ENCODE measurements at regions of chr13 and their contacts with region 1.

Region 1: DNA sequence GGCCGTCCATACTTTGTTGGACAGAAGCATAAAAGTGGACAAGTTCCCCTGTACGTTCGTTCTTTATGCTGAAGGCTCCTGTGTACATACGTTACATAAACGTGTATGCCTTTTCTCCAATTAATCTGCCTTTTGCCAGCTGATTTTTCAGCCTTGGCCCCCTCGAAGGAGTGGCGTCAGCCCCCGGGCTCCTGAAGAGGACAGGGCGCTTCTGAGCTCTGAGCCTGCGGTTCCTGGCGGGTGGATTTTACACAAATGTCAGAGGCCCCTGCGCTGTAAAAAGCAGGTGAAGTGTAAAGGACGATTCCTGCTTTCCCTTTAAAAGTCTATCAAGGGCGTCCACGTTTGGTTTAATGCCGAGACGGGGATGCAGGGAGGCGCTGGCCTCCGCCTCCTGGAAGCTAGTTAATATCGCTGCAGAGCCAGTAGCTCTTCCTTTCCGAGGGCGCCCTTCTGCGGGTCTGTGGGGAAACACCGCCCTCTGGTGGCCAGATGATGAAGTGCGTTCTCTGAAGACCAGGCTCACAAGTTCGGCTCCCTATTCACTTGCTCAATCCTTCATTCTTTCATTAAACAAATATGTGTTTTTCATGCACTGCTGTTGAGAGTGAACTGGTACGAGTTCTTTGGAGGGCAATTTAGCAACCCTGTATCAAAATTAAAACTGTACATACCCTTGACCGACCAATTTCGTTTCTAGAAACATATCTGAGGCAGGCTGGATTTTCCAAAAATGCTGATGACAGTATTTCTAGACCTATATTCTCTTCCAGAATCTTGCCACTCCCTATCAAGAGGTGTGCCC is 62.0 kb downstream of the GPR12 start:
- DNase-seq: peak; percentile 86
- ATAC-seq: peak; percentile 86
- H3K4me3 Mint-ChIP-seq: no peak overlapping the region
- H3K27ac Mint-ChIP-seq: no peak overlapping the region
- H3K4me1 Mint-ChIP-seq: no peaks in the 10 kb centered on the region
- H3K27me3 Mint-ChIP-seq: peaks cover 2% of the 10 kb centered on the region

Region 2: GRCh38 chr13:26482451-26483197 is 216.0 kb before region 1 on chr13:
- CTCF ChIA-PET with region 1: interaction called, 45 read pairs
- POLR2A ChIA-PET with region 1: no interaction called
- DNase-seq: peak; percentile 77
- ATAC-seq: peak; percentile 91
- H3K4me3 Mint-ChIP-seq: no peak overlapping the region
- H3K27ac Mint-ChIP-seq: peak overlapping the region; percentile 49
- H3K4me1 Mint-ChIP-seq: peaks cover 14% of the 10 kb centered on the region
- H3K27me3 Mint-ChIP-seq: no peaks in the 10 kb centered on the region

Region 3: DNA sequence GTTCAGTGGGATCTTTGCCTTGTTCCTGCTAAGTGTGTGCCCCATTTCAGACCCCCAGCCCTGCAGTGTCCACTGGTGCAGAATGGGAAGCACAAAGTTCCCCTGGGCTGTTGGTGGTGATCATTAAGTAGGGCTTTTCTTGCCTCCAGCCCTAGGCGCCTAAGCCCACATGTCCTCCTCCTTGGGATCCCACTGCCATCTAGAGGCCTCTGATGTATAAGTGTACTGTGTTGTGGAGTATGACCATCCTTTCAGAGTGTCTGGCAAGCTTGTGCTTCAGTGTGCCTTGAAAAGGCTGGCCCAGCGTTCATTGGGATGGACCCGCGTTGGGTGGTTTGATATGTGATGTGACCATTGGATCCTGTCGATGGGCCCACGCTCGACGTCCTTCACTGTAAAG is 69.9 kb before region 1 on chr13:
- CTCF ChIA-PET with region 1: interaction called, 10 read pairs
- POLR2A ChIA-PET with region 1: no interaction called
- DNase-seq: no peak
- ATAC-seq: no peak
- H3K4me3 Mint-ChIP-seq: no peak overlapping the region
- H3K27ac Mint-ChIP-seq: no peak overlapping the region
- H3K4me1 Mint-ChIP-seq: no peaks in the 10 kb centered on the region
- H3K27me3 Mint-ChIP-seq: no peaks in the 10 kb centered on the region

Region 4: GRCh38 chr13:26688286-26688685 is 10.3 kb before region 1 on chr13:
- CTCF ChIA-PET with region 1: interaction called, 24 read pairs
- POLR2A ChIA-PET with region 1: no interaction called
- DNase-seq: no peak
- ATAC-seq: no peak
- H3K4me3 Mint-ChIP-seq: no peak overlapping the region
- H3K27ac Mint-ChIP-seq: no peak overlapping the region
- H3K4me1 Mint-ChIP-seq: no peaks in the 10 kb centered on the region
- H3K27me3 Mint-ChIP-seq: peaks cover 9% of the 10 kb centered on the region

Region 5: GRCh38 chr13:26872525-26873385 is 174.2 kb after region 1 on chr13:
- CTCF ChIA-PET with region 1: interaction called, 14 read pairs
- POLR2A ChIA-PET with region 1: no interaction called
- DNase-seq: peak; percentile 76
- ATAC-seq: peak; percentile 71
- H3K4me3 Mint-ChIP-seq: no peak overlapping the region
- H3K27ac Mint-ChIP-seq: no peak overlapping the region
- H3K4me1 Mint-ChIP-seq: no peaks in the 10 kb centered on the region
- H3K27me3 Mint-ChIP-seq: peaks cover 6% of the 10 kb centered on the region